ENCODE measurements at regions of chr10 and their contacts with region 1.

Region 1: GRCh38 chr10:118621304-118621948 is 26.0 kb upstream of the PRLHR start:
- DNase-seq: peak; percentile 51
- H3K4me3 Mint-ChIP-seq: no peak overlapping the region
- H3K27ac Mint-ChIP-seq: no peak overlapping the region
- H3K4me1 Mint-ChIP-seq: peaks cover 13% of the 10 kb centered on the region
- H3K27me3 Mint-ChIP-seq: no peaks in the 10 kb centered on the region

Region 2: DNA sequence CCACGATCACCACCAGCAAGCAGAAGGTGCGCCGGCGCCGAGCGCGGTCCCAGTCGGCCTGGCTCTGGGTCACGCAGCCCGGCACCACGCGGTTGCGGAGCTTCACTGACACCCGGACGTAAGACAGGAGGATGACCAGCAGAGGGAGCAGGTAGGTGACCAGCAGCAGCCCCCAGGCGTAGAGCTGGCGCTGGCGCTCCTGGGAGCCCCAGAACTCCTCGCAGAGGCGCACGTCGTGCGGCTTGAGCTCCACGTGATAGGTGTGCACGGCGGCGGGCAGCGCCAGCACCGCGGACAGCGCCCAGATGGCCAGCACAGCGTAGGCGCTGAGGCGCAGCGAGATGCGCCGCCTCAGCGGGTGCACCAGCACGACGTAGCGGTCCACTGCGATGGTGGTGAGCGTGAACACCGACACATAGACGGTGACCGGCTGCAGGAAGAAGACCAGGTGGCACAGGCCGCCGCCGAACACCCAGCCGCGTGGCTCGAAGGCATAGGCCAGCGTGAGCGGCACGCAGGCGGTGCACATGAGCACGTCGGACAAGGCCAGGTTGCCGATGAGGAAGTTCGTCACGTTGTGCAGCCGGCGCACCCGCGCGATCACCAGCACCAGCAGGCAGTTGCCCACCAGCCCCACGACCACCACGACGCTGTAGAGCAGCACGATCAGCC is 26.9 kb before region 1 on chr10:
- CTCF ChIA-PET with region 1: interaction called, 4 read pairs
- intact Hi-C with region 1: loop called (anchors 1 kb)
- DNase-seq: peak; percentile 51
- H3K4me3 Mint-ChIP-seq: no peak overlapping the region
- H3K27ac Mint-ChIP-seq: no peak overlapping the region
- H3K4me1 Mint-ChIP-seq: peaks cover 23% of the 10 kb centered on the region
- H3K27me3 Mint-ChIP-seq: peaks cover 40% of the 10 kb centered on the region

Region 3: DNA sequence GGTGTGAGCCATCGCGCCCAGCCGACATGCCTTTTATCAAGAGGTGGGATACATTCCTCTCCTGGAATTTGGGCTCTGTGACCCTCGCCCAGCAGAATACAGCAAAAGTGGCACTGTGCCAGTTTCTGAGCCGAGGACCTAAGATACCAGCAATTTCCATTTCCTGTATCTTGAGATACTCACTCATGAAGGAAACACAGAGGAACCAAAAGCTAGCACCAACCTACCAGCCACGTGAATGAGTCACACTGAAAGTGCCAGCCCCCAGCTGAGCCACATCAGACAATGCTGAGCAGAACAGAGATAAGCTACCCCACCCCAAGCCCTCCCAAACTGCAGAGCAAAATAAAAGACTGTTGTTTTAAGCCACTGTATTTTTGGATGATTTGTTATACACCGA is 77.0 kb after region 1 on chr10:
- CTCF ChIA-PET with region 1: interaction called, 3 read pairs
- intact Hi-C with region 1: loop called (anchors 2 kb)
- DNase-seq: peak; percentile 90
- H3K4me3 Mint-ChIP-seq: no peak overlapping the region
- H3K27ac Mint-ChIP-seq: peak overlapping the region; percentile 32
- H3K4me1 Mint-ChIP-seq: peaks cover 49% of the 10 kb centered on the region
- H3K27me3 Mint-ChIP-seq: no peaks in the 10 kb centered on the region